Caco-2 (cell line): ENCODE measurements at regions of chr16 and their contacts with region 1.

Region 1: GRCh38 chr16:26976873-26977272 is 89.9 kb upstream of the C16orf82 start:
- DNase-seq: no peak
- H3K4me3 ChIP-seq: no peak overlapping the region
- H3K4me3 Mint-ChIP-seq: no peak overlapping the region
- H3K27ac Mint-ChIP-seq: no peak overlapping the region
- H3K4me1 ChIP-seq: no peaks in the 10 kb centered on the region
- H3K4me1 Mint-ChIP-seq: no peaks in the 10 kb centered on the region
- H3K27me3 ChIP-seq: no peaks in the 10 kb centered on the region; the same call in 1 of the 2 replicates
- H3K27me3 Mint-ChIP-seq: peaks cover 8% of the 10 kb centered on the region
- CTCF ChIP-seq: no peak

Region 2: DNA sequence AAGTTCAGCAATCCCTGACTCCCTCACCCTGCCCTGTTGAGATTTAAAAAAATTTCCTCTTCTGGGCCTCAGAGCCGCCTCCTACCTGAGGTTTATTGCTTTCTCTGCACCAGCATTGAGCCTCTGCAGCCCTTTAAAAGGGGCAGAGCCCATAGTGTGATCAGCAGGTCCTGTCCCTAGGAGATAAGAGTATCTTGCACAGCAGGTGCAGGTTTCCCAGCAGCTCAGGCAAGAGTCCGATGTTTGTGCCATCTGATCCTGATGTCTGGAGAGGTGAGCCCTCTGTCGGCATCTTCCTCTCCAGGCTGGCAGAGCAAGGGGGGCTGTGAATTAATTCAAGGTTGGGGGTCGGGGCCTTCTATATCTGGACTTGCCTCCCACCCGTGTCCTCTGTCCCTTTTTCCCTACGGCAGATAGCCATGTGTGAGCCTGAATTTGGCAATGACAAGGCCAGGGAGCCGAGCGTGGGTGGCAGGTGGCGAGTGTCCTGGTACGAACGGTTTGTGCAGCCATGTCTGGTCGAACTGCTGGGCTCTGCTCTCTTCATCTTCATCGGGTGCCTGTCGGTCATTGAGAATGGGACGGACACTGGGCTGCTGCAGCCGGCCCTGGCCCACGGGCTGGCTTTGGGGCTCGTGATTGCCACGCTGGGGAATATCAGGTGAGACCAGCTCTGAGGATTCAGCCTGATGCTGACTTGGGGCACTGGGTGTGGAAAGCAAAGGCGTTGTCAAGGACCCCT is 1759.9 kb before region 1 on chr16 and contains the start of gene AQP8:
- CTCF ChIA-PET with region 1: no interaction called
- POLR2A ChIA-PET with region 1: interaction called, 11 read pairs
- intact Hi-C with region 1: no loop called
- DNase-seq: no peak
- H3K4me3 ChIP-seq: no peak within 1 kb of the TSS
- H3K4me3 Mint-ChIP-seq: no peak within 1 kb of the TSS
- H3K27ac Mint-ChIP-seq: no peak within 1 kb of the TSS
- H3K4me1 ChIP-seq: no peaks in the 10 kb centered on the region
- H3K4me1 Mint-ChIP-seq: no peaks in the 10 kb centered on the region
- H3K27me3 ChIP-seq: no peaks in the 10 kb centered on the region
- H3K27me3 Mint-ChIP-seq: no peaks in the 10 kb centered on the region
- CTCF ChIP-seq: no peak
- total RNA-seq, gene AQP8: not detected in 2 replicates

Region 3: DNA sequence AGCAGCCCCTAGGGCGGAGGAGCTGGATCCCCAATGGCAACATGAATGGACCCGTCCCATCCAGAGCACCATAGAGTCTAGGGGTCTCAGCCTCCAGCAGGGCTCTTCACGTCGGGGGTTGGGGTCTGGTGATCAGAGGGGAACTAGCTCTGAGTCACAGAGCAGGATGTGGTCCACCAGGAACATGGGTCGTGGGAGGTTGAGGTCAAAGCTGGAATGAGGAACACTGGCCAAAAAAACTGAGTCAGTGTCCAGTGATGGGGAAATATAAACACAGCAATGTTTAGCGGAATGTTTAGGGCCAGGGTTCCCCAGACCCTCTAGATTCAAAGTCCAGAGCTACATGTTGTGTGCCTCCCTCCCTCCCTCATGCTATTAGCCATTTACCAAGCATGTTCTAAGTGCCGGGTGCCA is 10.7 kb after region 1 on chr16:
- CTCF ChIA-PET with region 1: no interaction called
- POLR2A ChIA-PET with region 1: no interaction called
- intact Hi-C with region 1: no loop called
- DNase-seq: no peak
- H3K4me3 ChIP-seq: no peak overlapping the region
- H3K4me3 Mint-ChIP-seq: no peak overlapping the region
- H3K27ac Mint-ChIP-seq: no peak overlapping the region
- H3K4me1 ChIP-seq: no peaks in the 10 kb centered on the region
- H3K4me1 Mint-ChIP-seq: no peaks in the 10 kb centered on the region
- H3K27me3 ChIP-seq: no peaks in the 10 kb centered on the region
- H3K27me3 Mint-ChIP-seq: peaks cover 12% of the 10 kb centered on the region
- CTCF ChIP-seq: no peak